ENCODE measurements at regions of chr15 and their contacts with region 1.

Region 1: DNA sequence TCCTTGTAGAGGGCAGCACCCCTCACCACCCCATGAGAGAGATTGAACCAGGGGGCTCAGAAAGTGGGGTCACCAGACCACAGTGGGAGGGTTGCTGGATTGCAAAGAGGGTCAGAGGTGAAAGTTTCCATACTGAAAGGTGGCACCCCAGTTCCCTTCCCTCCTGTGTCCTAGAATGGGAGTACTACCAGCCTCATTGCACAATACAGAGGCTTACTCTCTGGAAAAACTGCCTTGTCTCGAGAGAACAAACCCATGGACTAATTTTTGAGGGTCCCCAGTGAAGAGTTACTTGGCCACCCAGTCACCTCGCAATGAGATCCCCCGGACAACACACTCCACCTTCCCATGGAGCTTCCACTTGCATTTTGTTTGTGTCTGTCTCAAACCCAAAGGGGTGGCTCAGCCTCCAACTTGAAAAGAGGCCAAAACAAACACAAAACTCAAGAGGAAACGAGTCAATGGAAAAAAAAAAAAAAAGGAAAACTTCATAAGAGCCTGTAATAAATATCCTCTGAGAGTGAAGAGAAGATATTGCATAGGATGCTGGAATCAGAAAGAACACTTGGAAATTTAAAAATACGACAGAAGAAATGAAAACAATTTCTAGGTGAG is 18.6 kb downstream of the MESP2 start:
- DNase-seq: no peak
- H3K4me3 ChIP-seq: no peak overlapping the region
- H3K27ac ChIP-seq: no peak overlapping the region
- H3K4me1 ChIP-seq: no peaks in the 10 kb centered on the region
- H3K27me3 ChIP-seq: peaks cover 0 to 3% (median 0%) of the 10 kb centered on the region in 4 experiments; a peak in 1 of 7 replicates
- CTCF ChIP-seq: no peak
- EP300 ChIP-seq: no peak
- POLR2A ChIP-seq: no peak
- RAD21 ChIP-seq: no peak

Region 2: DNA sequence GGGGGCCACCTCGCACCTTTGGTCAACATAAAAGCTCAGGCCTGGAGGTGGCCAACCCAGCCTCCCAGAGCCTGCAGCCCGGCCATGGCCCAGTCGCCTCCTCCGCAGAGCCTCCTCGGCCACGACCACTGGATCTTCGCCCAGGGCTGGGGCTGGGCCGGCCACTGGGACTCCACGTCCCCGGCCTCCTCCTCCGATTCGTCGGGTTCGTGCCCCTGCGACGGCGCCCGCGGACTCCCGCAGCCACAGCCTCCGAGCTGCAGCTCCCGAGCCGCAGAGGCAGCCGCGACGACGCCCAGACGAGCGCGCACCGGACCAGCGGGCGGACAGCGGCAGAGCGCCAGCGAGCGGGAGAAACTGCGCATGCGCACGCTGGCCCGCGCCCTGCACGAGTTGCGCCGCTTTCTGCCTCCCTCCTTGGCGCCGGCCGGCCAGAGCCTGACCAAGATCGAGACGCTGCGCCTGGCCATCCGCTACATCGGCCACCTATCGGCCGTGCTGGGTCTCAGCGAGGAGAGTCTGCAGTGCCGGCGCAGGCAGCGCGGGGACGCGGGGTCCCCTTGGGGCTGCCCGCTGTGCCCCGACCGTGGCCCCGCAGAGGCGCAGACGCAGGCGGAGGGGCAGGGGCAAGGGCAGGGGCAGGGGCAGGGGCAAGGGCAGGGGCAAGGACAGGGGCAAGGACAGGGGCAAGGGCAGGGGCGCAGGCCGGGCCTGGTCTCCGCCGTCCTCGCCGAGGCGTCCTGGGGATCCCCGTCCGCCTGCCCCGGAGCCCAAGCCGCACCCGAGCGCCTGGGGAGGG is 18.3 kb before region 1 on chr15 and contains the start of gene MESP2:
- CTCF ChIA-PET with region 1: interaction called, 26 read pairs
- POLR2A ChIA-PET with region 1: interaction called, 5 read pairs
- DNase-seq: peak; percentile 75 to 90
- H3K4me3 ChIP-seq: peak within 1 kb of the TSS; percentile 3 to 56 (median 30); a peak in 7 of 8 replicates
- H3K27ac ChIP-seq: no peak within 1 kb of the TSS
- H3K4me1 ChIP-seq: peaks cover 0 to 4% (median 1%) of the 10 kb centered on the region in 4 experiments; a peak in 2 of 7 replicates
- H3K27me3 ChIP-seq: peaks cover 13 to 31% (median 27%) of the 10 kb centered on the region in 4 experiments
- CTCF ChIP-seq: peak; percentile 67 to 78 (median 71)
- EP300 ChIP-seq: no peak
- POLR2A ChIP-seq: no peak
- RAD21 ChIP-seq: peak; percentile 41 to 55; a peak in 3 of 4 replicates
- total RNA-seq, gene MESP2: 0.35 and 0.38 TPM in 2 replicates

Measured in H1 (cell line).